ENCODE measurements at regions of chr12 and their contacts with region 1.

Region 1: DNA sequence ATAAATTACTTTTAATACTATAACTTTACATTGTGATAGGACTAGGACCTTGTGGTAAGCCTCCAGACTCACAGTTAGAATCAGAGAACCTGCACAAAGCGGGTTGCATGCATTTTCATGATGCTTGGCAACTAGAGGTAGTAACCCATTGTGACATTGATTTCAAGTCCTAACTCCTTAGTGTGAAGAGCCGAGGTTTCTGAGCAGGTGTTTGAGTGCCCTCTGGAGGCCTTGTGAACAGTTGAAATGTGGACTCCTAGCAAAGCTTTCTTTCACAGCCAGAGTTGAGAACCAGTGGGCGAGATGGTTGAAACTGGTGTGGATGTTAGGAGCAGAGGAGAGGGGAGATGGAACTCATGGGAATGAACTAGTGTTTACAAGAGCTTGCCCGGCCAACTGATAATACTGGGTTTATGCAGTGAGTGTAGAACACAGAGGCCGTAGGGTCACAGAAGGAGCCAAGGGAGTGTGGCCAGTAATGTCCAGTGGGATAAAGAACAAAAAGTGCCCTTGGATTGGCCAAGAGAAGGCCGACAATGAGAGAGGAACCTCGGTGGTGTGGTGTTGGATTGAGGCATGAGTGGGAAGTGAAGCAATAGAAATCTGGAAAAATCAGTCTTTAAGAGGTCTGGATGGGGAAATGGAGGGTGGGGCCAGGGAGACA is 10.9 kb downstream of the ZNF664 start:
- DNase-seq: peak in 2 of 5 donors; percentile 38 to 62
- ATAC-seq: peak; percentile 64 to 84 (median 80)
- H3K4me3 ChIP-seq: no peak overlapping the region
- H3K27ac ChIP-seq: peak overlapping the region in 2 of 12 donors; percentile 12 to 23
- H3K4me1 ChIP-seq: peaks cover 3 to 56% (median 30%) of the 10 kb centered on the region in 12 donors
- H3K27me3 ChIP-seq: no peaks in the 10 kb centered on the region
- CTCF ChIP-seq: peak; percentile 41 to 78 (median 60)
- POLR2A ChIP-seq: no peak

Region 2: GRCh38 chr12:123601602-123602489 is 382.1 kb before region 1 on chr12 and contains the start of gene DDX55:
- intact Hi-C with region 1: no loop called
- DNase-seq: peak; percentile 83 to 91 (median 85)
- ATAC-seq: peak; percentile 88 to 98 (median 98)
- H3K4me3 ChIP-seq: peak within 1 kb of the TSS; percentile 66 to 100 (median 89)
- H3K27ac ChIP-seq: peak within 1 kb of the TSS; percentile 60 to 95 (median 87)
- H3K4me1 ChIP-seq: peaks cover 0 to 24% (median 12%) of the 10 kb centered on the region in 12 donors
- H3K27me3 ChIP-seq: no peaks in the 10 kb centered on the region
- CTCF ChIP-seq: peak; percentile 30 to 90 (median 66)
- POLR2A ChIP-seq: peak in 1 of 2 donors; percentile 64
- total RNA-seq, gene DDX55: 3.9 to 15.3 (median 5.1) TPM

Region 3: GRCh38 chr12:123713398-123713797 is 270.6 kb before region 1 on chr12:
- intact Hi-C with region 1: loop called in 1 of 10 experiments (anchors 5 kb)
- DNase-seq: no peak
- ATAC-seq: no peak
- H3K4me3 ChIP-seq: peak overlapping the region in 10 of 12 donors; percentile 72 to 100 (median 96)
- H3K27ac ChIP-seq: peak overlapping the region in 2 of 12 donors; percentile 71 to 85
- H3K4me1 ChIP-seq: peaks cover 7 to 36% (median 18%) of the 10 kb centered on the region in 12 donors
- H3K27me3 ChIP-seq: no peaks in the 10 kb centered on the region
- CTCF ChIP-seq: no peak
- POLR2A ChIP-seq: no peak

Region 4: GRCh38 chr12:124026755-124027745 is 43.1 kb after region 1 on chr12:
- intact Hi-C with region 1: loop called in 2 of 10 experiments (anchors 5 kb)
- DNase-seq: peak in 2 of 5 donors; percentile 40 to 54
- ATAC-seq: peak; percentile 59 to 88 (median 78)
- H3K4me3 ChIP-seq: no peak overlapping the region
- H3K27ac ChIP-seq: peak overlapping the region in 10 of 12 donors; percentile 15 to 79 (median 54)
- H3K4me1 ChIP-seq: peaks cover 0 to 44% (median 24%) of the 10 kb centered on the region in 12 donors
- H3K27me3 ChIP-seq: no peaks in the 10 kb centered on the region
- CTCF ChIP-seq: no peak
- POLR2A ChIP-seq: no peak

Measured in heart left ventricle (tissue), 16 donors.